Ascending aorta (tissue), 2 donors: ENCODE measurements at regions of chr4 and their contacts with region 1.

Region 1: DNA sequence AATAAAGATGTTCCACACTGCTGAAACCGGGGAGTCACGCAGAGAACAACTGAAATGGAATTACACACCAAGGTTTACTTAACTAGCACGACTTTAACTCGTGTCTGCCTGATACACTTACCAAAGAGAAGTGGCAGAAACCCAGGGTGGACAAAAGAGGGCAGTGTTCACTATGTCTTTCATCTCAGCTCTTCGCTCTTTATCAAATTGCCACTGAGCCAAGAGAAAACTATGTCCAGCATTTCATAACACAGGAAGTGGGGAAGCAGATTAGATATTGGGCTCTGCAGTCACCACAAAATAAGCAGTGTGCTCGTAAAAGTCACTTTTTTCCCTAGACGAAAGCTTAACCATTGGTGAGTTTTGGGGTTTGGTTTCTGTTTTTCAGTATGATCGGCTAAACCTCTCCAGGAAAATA is 155.7 kb downstream of the CHIC2 start:
- DNase-seq: peak in 1 of 2 donors; percentile 75
- H3K4me3 ChIP-seq: peak overlapping the region; percentile 10 to 49
- H3K27ac ChIP-seq: peak overlapping the region; percentile 45 to 60
- H3K4me1 ChIP-seq: peaks cover 0 to 3% of the 10 kb centered on the region in 2 donors
- H3K27me3 ChIP-seq: no peaks in the 10 kb centered on the region
- CTCF ChIP-seq: peak; percentile 31 to 61 (median 43)

Region 2: GRCh38 chr4:53015681-53016080 is 893.0 kb before region 1 on chr4:
- intact Hi-C with region 1: loop called (anchors 5 kb)
- DNase-seq: no peak
- H3K4me3 ChIP-seq: no peak overlapping the region
- H3K27ac ChIP-seq: peak overlapping the region in 1 of 2 donors; percentile 27
- H3K4me1 ChIP-seq: peaks cover 0 to 54% of the 10 kb centered on the region in 2 donors
- H3K27me3 ChIP-seq: no peaks in the 10 kb centered on the region
- CTCF ChIP-seq: peak; percentile 57 to 78 (median 76)

Region 3: GRCh38 chr4:53196882-53197771 is 711.5 kb before region 1 on chr4:
- intact Hi-C with region 1: loop called (anchors 5 kb)
- DNase-seq: no peak
- H3K4me3 ChIP-seq: peak overlapping the region in 1 of 2 donors; percentile 13
- H3K27ac ChIP-seq: no peak overlapping the region
- H3K4me1 ChIP-seq: no peaks in the 10 kb centered on the region
- H3K27me3 ChIP-seq: no peaks in the 10 kb centered on the region
- CTCF ChIP-seq: peak; percentile 66 to 77 (median 72)

Region 4: GRCh38 chr4:53365486-53366300 is 543.0 kb before region 1 on chr4 and contains the start of gene SCFD2:
- intact Hi-C with region 1: loop called (anchors 5 kb)
- DNase-seq: peak; percentile 95 to 99
- H3K4me3 ChIP-seq: peak within 1 kb of the TSS; percentile 69 to 97
- H3K27ac ChIP-seq: peak within 1 kb of the TSS; percentile 30 to 53
- H3K4me1 ChIP-seq: peaks cover 4 to 25% of the 10 kb centered on the region in 2 donors
- H3K27me3 ChIP-seq: no peaks in the 10 kb centered on the region
- CTCF ChIP-seq: no peak
- total RNA-seq, gene SCFD2: 22.8 TPM

Region 5: DNA sequence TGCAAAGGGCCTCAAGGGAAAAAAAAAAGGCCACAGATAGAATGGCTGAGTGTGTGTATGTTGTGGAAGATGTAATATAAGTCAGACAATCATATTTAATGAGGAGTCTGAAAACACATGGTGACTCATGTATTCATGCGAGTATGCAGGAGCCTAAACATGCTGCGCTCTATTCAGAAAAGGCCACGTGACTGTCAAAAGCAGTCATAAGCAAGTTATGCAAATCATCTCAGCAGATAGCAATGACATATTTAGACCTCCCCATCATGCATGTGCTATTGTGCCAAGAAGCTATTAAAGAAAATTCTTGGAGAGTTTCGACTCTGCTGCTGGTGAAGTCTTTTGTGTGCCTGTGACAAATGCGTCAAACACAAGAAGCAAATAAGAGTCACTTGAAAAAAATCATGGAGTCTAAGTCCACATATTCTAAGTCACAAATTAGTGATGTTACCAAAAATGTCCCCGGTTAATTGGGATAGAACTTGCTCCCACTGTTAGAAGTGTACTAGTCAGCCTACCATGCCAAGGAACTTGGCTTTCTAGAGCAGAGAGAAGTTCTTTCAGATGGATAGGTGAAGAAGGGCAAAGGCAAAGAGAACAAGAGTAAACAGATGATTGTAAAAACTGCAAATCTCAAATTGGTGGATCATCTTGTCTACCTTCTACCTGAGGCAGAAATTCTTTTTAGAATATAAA is 322.4 kb before region 1 on chr4:
- intact Hi-C with region 1: no loop called
- DNase-seq: no peak
- H3K4me3 ChIP-seq: no peak overlapping the region
- H3K27ac ChIP-seq: no peak overlapping the region
- H3K4me1 ChIP-seq: no peaks in the 10 kb centered on the region
- H3K27me3 ChIP-seq: no peaks in the 10 kb centered on the region
- CTCF ChIP-seq: no peak

Region 6: DNA sequence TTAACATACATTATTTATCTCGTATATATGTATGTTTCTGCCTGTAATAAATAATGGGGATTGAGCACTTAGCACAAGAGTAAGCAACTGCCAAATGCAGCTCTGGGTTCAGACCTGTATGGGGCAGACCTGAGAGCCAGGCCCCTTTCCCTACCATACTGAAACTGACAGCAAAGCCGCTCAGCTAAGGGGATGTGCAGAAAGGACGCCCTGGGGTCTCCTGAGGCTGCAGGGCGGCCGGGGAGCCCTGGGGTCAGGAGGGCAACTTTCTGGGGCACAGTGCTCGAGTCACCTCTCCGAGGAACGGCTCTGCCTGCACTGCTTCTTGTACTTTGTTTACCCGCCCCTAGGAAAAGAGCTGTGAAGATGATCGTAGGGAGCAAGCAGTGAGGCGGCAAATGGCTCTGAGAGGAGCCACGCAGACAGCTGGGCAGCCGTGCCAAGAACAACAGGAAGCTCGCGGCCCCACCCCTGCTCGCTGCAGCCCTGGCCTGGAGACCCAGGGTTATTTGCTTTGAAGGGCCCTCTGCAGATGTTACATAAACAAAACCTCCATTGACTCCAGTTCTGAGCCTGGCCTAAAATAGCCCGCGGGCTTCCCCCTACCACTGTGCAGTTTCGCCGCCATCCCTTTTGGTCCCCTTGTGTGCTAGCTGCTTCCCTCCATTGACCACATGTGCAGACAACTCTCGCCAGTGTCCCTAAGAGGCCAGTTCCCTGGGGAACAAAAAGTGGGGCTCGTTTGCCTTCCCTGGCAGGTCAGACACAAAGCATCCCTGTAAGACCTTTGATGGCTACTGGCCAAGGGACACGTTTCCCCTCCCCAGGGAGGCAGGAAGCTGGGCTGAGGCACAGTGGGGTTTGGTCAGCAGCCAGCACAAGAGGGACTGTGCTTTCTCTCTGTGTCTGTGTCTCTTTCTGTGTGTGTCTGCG is 206.1 kb before region 1 on chr4:
- intact Hi-C with region 1: loop called (anchors 5 kb)
- DNase-seq: peak in 1 of 2 donors; percentile 80
- H3K4me3 ChIP-seq: peak overlapping the region; percentile 39 to 52
- H3K27ac ChIP-seq: peak overlapping the region; percentile 52 to 65
- H3K4me1 ChIP-seq: peaks cover 0 to 16% of the 10 kb centered on the region in 2 donors
- H3K27me3 ChIP-seq: no peaks in the 10 kb centered on the region
- CTCF ChIP-seq: no peak

Region 7: DNA sequence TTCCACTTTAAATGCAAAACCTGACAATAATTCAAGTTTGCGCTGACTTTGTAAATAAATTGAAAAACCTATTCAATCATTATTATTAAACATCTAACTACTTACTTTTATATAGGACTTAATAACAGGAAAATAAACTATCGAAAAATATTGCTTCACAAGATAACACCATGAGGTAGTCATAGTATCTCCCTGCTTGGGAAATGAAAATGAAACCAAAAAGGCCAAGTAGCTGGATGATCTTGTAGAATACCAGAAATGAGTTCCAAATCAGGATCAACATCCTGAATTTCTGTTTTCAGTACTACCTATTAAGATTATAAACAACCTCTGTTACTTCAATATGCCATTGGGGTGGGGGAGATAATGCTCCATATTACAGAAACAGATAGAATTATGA is 96.8 kb after region 1 on chr4:
- intact Hi-C with region 1: no loop called
- DNase-seq: no peak
- H3K4me3 ChIP-seq: no peak overlapping the region
- H3K27ac ChIP-seq: no peak overlapping the region
- H3K4me1 ChIP-seq: no peaks in the 10 kb centered on the region
- H3K27me3 ChIP-seq: no peaks in the 10 kb centered on the region
- CTCF ChIP-seq: no peak

Region 8: DNA sequence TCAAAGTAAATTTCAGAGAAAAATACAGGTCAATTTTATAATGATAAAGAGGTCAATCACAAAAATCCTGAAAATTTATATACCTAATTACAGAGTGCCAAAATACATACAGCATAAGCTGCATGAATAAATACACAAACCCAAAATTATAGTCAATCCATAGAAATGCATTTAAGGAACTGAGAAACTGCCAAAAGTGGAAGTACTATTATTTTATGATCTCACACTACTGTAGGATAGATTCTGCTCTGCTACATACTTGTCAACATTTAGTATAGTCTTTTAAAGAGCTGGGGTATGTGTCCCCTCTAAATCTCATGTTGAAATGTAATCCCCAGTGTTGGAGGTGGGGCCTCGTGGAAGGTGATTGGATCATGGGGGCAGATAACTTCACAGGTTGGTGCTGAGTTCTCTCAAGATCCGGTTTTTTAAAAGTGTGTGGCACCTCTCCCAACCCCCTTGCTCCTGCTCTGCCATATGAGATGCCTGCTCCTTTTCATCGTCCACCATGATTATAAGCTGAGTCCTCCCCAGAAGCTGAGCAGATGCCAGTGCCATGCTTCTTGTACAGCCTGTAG is 124.0 kb after region 1 on chr4:
- intact Hi-C with region 1: no loop called
- DNase-seq: no peak
- H3K4me3 ChIP-seq: peak overlapping the region in 1 of 2 donors; percentile 7
- H3K27ac ChIP-seq: no peak overlapping the region
- H3K4me1 ChIP-seq: peaks cover 0 to 4% of the 10 kb centered on the region in 2 donors
- H3K27me3 ChIP-seq: no peaks in the 10 kb centered on the region
- CTCF ChIP-seq: no peak

Region 9: DNA sequence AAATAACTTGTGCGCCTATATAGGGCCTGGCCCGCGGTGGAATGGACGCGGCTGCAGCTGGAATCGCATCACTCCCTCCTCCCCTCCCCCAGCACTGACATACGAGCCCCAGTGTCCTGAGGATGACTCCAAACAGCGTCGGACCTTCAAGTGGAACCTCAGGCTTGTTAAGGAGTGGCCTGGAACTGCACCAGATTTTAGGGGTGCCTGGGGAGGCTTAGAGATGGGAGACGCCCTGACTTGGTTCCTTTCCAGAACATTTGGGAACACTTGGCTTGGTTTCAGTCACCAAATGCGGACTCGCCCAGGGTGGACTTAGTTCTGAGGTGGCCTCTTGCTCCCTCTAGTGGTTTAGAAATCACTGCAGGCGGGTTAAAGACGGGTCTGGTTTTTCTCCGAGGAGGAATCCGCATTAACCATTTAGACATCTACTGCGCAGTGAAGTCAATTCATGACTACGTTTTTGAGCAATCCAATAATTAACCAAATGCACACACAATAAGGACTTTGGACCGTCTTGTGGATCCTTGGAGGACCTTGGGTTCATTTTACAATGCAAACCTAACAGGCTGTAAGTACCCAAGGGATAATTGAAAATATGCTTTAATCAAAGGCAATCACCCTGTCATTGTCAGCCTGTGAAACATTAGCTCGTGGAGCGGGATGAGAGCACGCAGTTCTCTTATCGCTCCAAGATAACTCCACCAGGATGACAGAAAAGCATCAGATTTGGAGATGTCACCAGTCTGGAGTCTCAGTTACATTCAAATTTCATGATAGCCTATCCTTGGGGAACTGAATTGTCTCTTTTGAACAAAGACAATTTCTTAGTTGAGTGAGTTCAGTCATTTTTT is 309.2 kb after region 1 on chr4:
- intact Hi-C with region 1: loop called (anchors 2 kb)
- DNase-seq: peak in 1 of 2 donors; percentile 90
- H3K4me3 ChIP-seq: peak overlapping the region; percentile 51 to 63
- H3K27ac ChIP-seq: peak overlapping the region in 1 of 2 donors; percentile 39
- H3K4me1 ChIP-seq: peaks cover 0 to 3% of the 10 kb centered on the region in 2 donors
- H3K27me3 ChIP-seq: no peaks in the 10 kb centered on the region
- CTCF ChIP-seq: peak; percentile 83 to 95 (median 92)